Activated T-helper 2 cell treated with anti-CD3 and anti-CD28 coated beads, Interferon-gamma antibody, Interleukin-2, Interleukin-4, amounts not matched to agents 10 μg/mL and 5 μg/mL and 100 μg/mL, durations not matched to agents 14 hours and 24 hours and 36 hours (primary cell): ENCODE measurements at regions of chr5 and their contacts with region 1.

Region 1: GRCh38 chr5:88251048-88251711 is 17.5 kb downstream of the TMEM161B start:
- DNase-seq: peak; percentile 20
- H3K4me3 Mint-ChIP-seq: peak overlapping the region; percentile 9
- H3K27ac Mint-ChIP-seq: peak overlapping the region; percentile 82
- H3K4me1 Mint-ChIP-seq: peaks cover 66% of the 10 kb centered on the region
- H3K27me3 Mint-ChIP-seq: no peaks in the 10 kb centered on the region

Region 2: GRCh38 chr5:87412630-87413342 is 838.4 kb before region 1 on chr5 and contains the start of gene CCNH:
- intact Hi-C with region 1: loop called (anchors 2 kb)
- DNase-seq: peak; percentile 95
- H3K4me3 Mint-ChIP-seq: peak within 1 kb of the TSS; percentile 99
- H3K27ac Mint-ChIP-seq: peak within 1 kb of the TSS; percentile 96
- H3K4me1 Mint-ChIP-seq: peaks cover 26% of the 10 kb centered on the region
- H3K27me3 Mint-ChIP-seq: peaks cover 4% of the 10 kb centered on the region
- total RNA-seq, gene CCNH: 68.2 and 70.1 TPM in 2 replicates

Region 3: DNA sequence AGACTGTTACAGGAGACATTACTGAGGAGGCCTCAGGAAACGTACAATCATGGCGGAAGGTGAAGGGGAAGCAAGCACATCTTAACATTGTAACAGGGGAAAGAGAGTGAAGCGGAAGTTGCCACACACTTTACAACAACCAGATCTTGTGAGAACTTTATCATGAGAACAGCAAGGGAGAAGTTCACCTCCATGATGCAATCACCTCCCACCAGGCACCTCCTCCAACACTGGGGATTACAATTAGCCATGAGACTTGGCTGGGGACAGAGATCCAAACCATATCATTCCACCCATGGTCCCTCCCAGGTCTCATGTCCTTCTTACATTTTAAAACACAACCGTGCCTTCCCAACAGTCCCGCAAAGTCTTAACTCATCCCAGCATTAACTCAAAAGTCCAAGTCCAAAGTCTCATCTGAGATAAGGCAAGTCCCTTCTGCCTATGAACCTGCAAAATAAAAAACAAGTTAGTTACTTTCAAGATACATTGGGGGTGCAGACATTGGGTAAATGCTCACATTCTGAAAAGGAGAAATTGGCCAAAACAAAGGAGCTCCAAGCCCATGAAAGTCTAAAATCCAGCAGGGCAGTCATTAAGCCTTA is 120.9 kb before region 1 on chr5:
- intact Hi-C with region 1: no loop called
- DNase-seq: no peak
- H3K4me3 Mint-ChIP-seq: no peak overlapping the region
- H3K27ac Mint-ChIP-seq: no peak overlapping the region
- H3K4me1 Mint-ChIP-seq: no peaks in the 10 kb centered on the region
- H3K27me3 Mint-ChIP-seq: peaks cover 12% of the 10 kb centered on the region

Region 4: DNA sequence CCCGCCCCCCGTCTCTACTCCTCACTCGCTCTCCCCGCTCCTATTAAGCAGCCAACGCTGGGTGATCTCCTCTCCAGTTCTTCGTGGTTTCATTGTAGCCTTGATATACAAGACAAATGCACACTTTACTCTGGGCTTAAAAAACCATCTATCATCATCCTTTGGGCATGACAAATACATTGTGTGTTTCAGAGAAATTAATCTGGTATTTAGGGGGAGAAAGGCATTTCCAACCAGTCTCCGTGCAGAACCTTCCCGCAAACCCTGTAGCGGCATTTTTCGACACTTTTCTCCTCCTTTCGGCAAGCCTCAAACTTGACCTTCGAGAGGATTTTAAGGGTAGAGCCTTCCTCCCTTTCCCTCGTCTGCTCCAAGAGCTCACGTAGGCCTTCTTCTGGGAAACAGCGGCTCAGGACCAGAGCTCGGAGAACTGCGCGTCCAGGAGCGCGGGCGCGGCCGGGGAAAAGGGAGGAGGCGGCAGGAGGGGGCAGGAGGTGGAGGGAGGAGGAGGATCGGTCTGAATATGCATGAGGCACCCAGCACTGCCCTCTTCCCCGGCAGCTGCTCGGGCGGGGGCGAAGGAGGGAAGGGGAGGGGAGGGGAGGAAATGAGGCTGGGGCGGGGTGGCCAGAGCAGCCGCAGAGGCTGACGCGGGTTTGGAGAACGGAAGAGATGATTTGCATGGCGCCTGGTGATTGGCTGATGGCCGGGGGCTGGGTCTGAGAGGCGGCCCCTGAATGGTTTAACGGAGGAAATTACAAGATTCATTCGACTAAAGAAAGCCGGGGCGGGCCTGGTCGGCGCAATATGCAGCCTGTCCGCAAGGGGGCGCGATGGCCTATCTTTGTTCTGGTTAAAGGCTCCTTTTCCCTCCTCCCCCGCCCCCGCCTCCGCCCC is 110.1 kb before region 1 on chr5:
- intact Hi-C with region 1: loop called (anchors 5 kb)
- DNase-seq: peak; percentile 94
- H3K4me3 Mint-ChIP-seq: no peak overlapping the region
- H3K27ac Mint-ChIP-seq: no peak overlapping the region
- H3K4me1 Mint-ChIP-seq: peaks cover 21% of the 10 kb centered on the region
- H3K27me3 Mint-ChIP-seq: peaks cover 37% of the 10 kb centered on the region

Region 5: DNA sequence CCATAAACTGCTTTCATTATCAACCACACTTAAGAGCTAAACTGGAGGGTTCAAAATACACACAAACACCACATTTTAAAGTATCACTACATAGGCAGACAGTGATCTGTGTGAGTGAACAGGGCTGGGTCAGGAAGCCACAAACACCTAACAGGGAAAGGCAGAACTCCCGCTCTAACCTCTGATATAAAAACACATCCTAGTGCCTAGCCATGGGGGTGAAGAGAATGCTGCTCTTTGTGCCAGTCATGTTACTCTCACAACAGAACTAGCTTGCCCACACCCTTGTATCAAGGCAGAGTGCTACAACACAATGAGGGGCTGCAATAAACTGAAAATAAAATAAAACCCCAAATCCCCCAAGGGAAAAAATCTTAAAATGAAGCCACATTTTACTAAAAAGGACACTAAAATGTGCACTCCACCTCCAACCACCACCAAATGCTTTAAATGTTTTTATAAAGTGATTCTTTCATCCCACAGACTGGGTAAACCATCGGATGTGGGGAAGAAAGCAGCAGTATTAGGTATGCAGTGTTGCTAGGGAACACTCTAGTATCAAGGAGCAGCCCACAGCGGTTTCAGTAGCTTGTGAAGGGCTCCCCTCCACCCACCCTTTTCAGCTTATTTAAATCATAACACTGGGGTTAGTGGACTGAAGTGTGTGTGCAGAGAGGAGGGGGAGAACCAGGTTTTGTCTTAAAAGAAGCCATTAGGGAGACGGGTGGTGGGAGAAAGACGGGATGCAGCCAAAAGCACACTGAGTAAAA is 47.0 kb before region 1 on chr5:
- intact Hi-C with region 1: loop called (anchors 5 kb)
- DNase-seq: no peak
- H3K4me3 Mint-ChIP-seq: peak overlapping the region; percentile 7
- H3K27ac Mint-ChIP-seq: peak overlapping the region; percentile 70
- H3K4me1 Mint-ChIP-seq: peaks cover 11% of the 10 kb centered on the region
- H3K27me3 Mint-ChIP-seq: no peaks in the 10 kb centered on the region

Region 6: DNA sequence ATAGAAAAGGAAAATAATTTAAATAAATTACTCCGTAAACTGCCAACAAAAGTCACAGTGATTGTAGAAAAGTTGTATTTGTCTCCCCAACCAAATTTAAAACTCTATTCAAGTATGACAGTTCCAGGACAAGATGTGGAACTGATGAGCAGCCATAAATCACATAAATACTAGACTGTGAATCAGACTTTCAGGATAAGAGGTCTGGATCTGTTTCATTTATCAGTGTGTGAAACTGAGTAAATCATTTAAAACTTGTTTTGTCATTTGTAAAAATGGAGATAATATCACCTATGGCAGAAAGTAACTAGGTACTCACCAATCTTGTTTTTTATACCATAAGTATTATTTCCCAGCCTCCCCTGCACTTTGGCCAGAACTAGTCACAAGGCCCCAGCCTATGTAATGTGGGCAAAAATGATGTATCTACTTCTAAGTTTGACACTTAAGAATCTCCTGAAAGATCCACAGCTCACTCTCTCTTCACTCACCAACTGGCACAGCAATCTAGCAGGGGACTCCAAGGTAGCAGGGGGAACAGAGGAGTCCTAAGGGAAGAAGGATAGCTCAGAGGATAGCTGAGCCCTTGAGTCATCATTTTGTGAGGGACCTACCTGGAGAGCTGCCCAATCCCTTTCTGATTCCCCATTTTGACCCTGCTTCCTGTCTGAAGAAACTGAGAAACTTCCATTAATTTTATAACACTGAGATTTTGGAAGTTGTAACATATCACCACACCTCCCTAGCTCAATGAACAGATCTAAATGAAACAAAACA is 14.1 kb before region 1 on chr5:
- intact Hi-C with region 1: loop called (anchors 1 kb)
- DNase-seq: no peak
- H3K4me3 Mint-ChIP-seq: no peak overlapping the region
- H3K27ac Mint-ChIP-seq: peak overlapping the region; percentile 63
- H3K4me1 Mint-ChIP-seq: peaks cover 22% of the 10 kb centered on the region
- H3K27me3 Mint-ChIP-seq: no peaks in the 10 kb centered on the region

Region 7: GRCh38 chr5:88262116-88262515 is 10.9 kb after region 1 on chr5:
- intact Hi-C with region 1: loop called (anchors 1 kb)
- DNase-seq: no peak
- H3K4me3 Mint-ChIP-seq: no peak overlapping the region
- H3K27ac Mint-ChIP-seq: peak overlapping the region; percentile 48
- H3K4me1 Mint-ChIP-seq: peaks cover 43% of the 10 kb centered on the region
- H3K27me3 Mint-ChIP-seq: no peaks in the 10 kb centered on the region

Region 8: DNA sequence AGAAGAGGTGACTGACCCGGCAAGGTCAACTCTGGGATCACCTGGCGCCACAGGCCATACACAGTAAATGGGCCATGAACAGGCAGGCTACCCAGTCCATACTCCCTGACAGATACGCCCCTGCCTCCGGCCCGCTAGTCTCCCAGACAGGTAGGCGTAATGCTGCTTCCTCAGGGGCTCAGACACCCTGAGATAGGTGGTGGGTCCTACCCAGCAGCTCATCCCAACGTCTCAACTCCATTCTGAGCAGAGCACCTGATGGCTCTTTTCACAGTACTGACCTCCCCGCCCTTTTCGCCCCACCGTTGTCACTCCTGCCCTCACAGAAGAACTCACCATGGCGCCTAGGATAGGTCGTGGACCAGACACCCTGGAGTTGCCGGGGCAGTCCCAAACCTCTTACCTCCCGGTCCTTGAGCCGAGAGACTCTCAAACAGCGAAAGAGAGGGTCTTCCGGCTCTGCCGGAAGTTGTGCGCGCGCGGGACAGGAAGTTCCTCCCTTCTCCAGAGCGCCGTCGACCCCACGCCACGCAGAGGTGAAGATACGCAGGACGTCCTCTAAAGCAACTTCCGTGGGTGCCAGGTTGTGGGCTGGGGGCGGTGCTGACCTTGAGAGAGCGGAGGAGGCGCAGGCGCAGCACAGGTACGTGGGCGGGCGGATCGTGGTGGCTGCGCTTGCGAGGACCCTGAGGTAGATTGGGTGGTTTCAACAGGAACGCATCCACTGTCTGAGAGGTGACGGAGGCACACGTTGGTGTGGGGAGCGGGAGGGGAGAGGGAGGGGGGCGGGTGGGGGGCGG is 17.4 kb after region 1 on chr5 and contains the start of gene TMEM161B:
- intact Hi-C with region 1: loop called (anchors 1 kb)
- DNase-seq: peak; percentile 90
- H3K4me3 Mint-ChIP-seq: peak within 1 kb of the TSS; percentile 99
- H3K27ac Mint-ChIP-seq: peak within 1 kb of the TSS; percentile 97
- H3K4me1 Mint-ChIP-seq: peaks cover 45% of the 10 kb centered on the region
- H3K27me3 Mint-ChIP-seq: no peaks in the 10 kb centered on the region
- total RNA-seq, gene TMEM161B: 31.1 and 32.7 TPM in 2 replicates

Region 9: GRCh38 chr5:88524941-88525340 is 273.8 kb after region 1 on chr5:
- intact Hi-C with region 1: no loop called
- DNase-seq: no peak
- H3K4me3 Mint-ChIP-seq: no peak overlapping the region
- H3K27ac Mint-ChIP-seq: no peak overlapping the region
- H3K4me1 Mint-ChIP-seq: no peaks in the 10 kb centered on the region
- H3K27me3 Mint-ChIP-seq: peaks cover 4% of the 10 kb centered on the region